ENCODE measurements at regions of chr1 and their contacts with region 1.

Region 1: DNA sequence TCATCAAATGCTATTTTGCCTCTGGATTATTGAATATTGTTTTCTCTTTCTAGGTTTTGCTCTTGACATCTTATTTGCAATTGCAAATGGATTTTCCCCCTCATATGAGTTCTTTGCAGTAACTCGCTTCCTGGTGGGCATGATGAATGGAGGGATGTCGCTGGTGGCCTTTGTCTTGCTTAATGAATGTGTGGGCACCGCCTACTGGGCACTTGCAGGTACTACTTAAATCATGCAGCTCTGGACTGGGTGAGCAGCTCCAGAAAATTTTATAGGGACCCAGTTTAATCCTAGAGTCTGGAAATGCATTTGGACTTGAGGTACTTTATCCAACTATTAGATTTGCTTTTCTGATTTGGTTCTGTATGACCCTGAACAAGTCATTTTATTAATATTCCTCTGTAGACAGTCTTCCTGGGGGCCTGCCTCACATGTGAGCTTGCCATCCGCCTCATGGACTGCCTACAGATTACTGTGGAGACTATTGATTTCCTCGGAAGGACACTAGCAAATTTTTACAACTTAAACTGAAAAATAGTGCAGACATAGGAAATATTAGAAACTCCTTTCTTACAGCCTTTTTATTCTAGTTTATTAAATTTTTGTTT is 44.5 kb downstream of the SLC22A15 start:
- DNase-seq: peak; percentile 63
- H3K4me3 ChIP-seq: peak overlapping the region in 1 of 2 experiments; percentile 46; a peak in 1 of 4 replicates
- H3K27ac ChIP-seq: no peak overlapping the region
- H3K4me1 ChIP-seq: no peaks in the 10 kb centered on the region
- H3K27me3 ChIP-seq: no peaks in the 10 kb centered on the region
- CTCF ChIP-seq: peak; percentile 69
- EP300 ChIP-seq: no peak
- RAD21 ChIP-seq: peak; percentile 73

Region 2: DNA sequence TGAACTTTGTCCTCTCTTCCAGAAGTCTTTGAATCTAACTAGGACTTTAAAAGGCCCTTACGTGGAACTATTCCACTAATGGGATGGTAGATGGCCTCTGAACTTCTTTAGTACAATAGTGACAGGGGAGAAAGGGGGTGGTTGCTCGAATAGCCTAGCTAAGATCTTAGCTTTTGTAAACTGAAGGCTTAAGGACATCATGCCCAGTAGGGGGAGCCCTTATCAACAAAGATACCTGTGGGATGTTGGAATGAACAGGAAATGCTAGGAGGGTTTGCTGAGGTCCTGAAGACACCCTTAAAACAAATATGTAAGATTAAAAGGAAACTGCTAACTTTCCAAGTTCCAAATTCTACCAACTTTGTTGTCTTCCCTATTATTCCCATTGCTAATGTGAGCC is 213.0 kb before region 1 on chr1:
- CTCF ChIA-PET with region 1: interaction called, 29 read pairs
- POLR2A ChIA-PET with region 1: no interaction called
- DNase-seq: peak; percentile 51
- H3K4me3 ChIP-seq: no peak overlapping the region; a peak in 1 of 4 replicates
- H3K27ac ChIP-seq: no peak overlapping the region
- H3K4me1 ChIP-seq: peaks cover 0 to 7% of the 10 kb centered on the region in 2 experiments; a peak in 1 of 4 replicates
- H3K27me3 ChIP-seq: no peaks in the 10 kb centered on the region; the same call in 1 of the 2 replicates
- CTCF ChIP-seq: peak; percentile 82
- EP300 ChIP-seq: no peak
- RAD21 ChIP-seq: peak; percentile 85

Region 3: DNA sequence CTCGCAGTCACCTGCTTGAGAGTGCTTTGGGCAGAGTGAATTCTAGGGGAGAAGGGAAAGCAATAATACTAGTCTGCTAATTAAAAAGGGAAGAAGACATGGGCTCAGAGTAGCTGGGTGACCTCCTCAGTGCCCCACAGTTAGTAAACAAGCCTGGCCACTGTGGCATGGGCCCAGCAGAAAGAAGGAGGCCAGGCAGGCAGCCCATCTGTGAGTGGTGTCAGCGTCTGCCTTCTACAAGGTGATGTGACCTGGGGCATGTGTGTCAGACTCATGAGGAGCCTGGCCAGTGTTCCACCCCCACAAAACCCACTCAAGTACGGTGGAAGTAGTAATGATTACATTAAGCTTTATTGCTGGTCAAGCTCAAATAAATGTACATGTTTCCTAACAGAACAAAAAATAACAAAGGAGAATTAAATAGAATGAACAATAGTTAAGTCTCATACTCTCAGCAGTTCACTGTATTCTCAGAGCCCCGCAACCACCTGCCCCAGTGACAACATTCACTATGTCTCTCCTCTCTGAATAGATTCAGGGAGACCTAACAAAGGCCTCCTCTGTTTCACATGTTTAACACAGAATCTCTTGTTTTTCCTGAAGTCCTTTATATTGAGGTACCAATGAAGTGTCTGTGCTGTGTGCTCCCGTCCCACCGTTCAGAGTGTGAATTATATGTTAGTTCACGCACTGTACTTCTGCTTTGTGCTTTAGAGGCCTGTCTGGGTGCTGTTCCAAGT is 12.0 kb before region 1 on chr1:
- CTCF ChIA-PET with region 1: interaction called, 12 read pairs
- POLR2A ChIA-PET with region 1: no interaction called
- DNase-seq: no peak
- H3K4me3 ChIP-seq: no peak overlapping the region
- H3K27ac ChIP-seq: no peak overlapping the region; a peak in 1 of 4 replicates
- H3K4me1 ChIP-seq: peaks cover 0 to 11% of the 10 kb centered on the region in 2 experiments; a peak in 1 of 4 replicates
- H3K27me3 ChIP-seq: no peaks in the 10 kb centered on the region
- CTCF ChIP-seq: no peak
- EP300 ChIP-seq: no peak
- RAD21 ChIP-seq: no peak

Region 4: DNA sequence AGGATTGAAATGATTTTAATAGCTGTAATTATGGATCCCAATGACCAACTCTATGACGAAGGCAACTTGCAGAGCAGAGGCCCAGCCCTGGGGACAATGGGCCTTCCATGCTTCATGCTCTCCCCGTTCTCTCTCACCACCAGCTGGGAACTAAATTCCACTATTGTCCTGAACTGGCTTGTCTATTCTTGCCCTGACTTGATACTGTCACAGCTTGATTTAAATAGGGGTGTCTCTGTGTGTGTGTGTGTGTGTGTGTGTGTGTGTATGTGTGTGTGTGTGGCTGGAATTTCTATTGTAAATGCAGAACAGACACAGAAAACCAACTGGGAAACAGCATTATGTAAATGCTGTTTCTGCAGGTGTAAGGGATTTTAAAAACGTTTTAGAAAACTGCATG is 12.6 kb after region 1 on chr1:
- CTCF ChIA-PET with region 1: interaction called, 18 read pairs
- POLR2A ChIA-PET with region 1: no interaction called
- DNase-seq: no peak
- H3K4me3 ChIP-seq: no peak overlapping the region
- H3K27ac ChIP-seq: no peak overlapping the region
- H3K4me1 ChIP-seq: no peaks in the 10 kb centered on the region
- H3K27me3 ChIP-seq: no peaks in the 10 kb centered on the region
- CTCF ChIP-seq: no peak
- EP300 ChIP-seq: no peak
- RAD21 ChIP-seq: no peak

Region 5: DNA sequence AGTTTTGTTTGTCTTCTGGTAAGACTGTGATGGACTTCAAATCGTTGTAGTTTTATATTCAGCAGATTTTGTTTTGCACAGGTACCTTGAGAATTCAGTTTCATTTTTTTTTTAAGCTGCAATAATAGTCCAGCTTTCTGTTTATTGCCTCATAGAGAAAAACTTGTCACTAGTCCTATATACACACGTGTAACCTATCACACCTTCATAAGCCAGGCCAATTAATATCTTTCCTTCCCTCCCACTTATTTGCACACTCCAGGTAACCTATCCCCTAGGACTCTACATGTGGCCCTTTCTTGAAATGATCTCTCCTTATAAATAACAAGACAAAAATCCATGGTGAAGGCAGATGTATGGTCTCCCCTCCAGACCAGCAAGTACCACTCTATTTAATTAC is 17.9 kb after region 1 on chr1:
- CTCF ChIA-PET with region 1: interaction called, 18 read pairs
- POLR2A ChIA-PET with region 1: no interaction called
- DNase-seq: no peak
- H3K4me3 ChIP-seq: no peak overlapping the region
- H3K27ac ChIP-seq: no peak overlapping the region
- H3K4me1 ChIP-seq: no peaks in the 10 kb centered on the region
- H3K27me3 ChIP-seq: no peaks in the 10 kb centered on the region
- CTCF ChIP-seq: no peak
- EP300 ChIP-seq: no peak
- RAD21 ChIP-seq: no peak

Region 6: DNA sequence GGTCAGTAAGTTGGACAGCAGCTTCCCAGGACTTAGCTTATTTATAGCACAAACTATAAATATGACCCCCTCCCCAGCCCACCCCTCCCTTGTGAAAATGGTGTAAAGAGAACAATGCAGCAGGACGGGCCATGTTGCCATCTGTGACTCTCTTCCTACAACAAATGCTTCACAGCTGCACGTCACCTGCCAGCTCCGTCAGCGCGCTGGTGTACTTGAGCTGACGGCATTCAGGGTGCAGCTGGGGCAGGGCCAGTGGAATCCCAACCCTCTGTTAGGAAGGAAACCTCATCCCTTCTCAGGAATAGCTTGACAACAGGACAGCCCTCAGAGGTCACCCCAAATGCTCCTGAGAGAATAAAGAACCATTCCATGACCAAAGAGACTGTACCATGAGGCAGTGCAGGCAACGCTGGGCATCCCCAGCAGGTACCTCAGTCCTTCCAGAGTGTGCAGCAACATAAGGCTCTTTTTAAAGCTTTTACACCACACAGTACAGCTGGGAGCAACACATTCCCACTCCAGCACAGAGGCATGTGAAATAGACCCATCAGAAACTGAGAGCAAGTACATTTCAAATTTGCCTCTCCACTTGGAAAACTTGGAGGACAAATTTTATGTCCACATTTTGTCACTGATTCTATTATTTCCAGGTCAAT is 437.3 kb after region 1 on chr1:
- CTCF ChIA-PET with region 1: no interaction called
- POLR2A ChIA-PET with region 1: no interaction called
- DNase-seq: no peak
- H3K4me3 ChIP-seq: no peak overlapping the region
- H3K27ac ChIP-seq: no peak overlapping the region
- H3K4me1 ChIP-seq: peaks cover 0 to 7% of the 10 kb centered on the region in 2 experiments; a peak in 2 of 4 replicates
- H3K27me3 ChIP-seq: no peaks in the 10 kb centered on the region
- CTCF ChIP-seq: no peak
- EP300 ChIP-seq: no peak
- RAD21 ChIP-seq: no peak